Activated B cell treated with CpG ODN at 0.5 μM for 24 hours (primary cell): ENCODE measurements at regions of chr20 and their contacts with region 1.

Region 1: GRCh38 chr20:45890985-45891983 is at the starts of genes CTSA and NEURL2:
- DNase-seq: peak; percentile 86
- ATAC-seq: peak; percentile 87
- H3K4me3 Mint-ChIP-seq: peak within 1 kb of the TSS; percentile 93
- H3K27ac Mint-ChIP-seq: peak within 1 kb of the TSS; percentile 87
- H3K4me1 Mint-ChIP-seq: peaks cover 30% of the 10 kb centered on the region
- H3K27me3 Mint-ChIP-seq: no peaks in the 10 kb centered on the region
- CTCF ChIP-seq: no peak
- total RNA-seq, gene CTSA: 61.9 and 67.2 TPM in 2 replicates
- total RNA-seq, gene NEURL2: 1.1 and 2.0 TPM in 2 replicates

Region 2: DNA sequence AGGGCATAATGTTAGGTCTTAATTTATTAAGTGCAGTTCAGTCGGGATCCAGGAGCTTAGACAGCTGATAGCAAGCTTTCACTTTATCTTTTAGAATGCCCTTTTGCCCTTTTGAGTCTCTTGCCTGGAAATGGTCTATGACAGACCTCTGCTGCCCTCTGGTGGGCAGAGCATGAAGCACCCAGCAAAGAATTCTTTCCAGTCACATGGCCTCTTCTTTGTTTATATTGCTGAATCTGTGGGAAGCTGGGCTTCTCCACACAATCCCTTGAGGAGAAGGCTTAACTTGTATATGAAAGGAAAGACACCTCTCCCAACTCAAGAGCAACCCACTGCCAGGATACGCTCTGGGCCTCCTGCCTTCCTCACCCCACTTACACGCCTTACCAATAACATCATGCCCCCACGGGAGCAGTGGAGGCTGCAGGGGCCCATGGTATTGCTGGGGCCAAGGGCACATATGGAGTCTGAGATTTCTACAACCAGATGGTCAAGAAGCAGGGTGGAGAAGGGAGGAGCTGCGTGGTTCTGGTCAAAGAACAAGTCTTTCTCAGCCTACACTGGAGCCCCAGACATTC is 120.0 kb before region 1 on chr20:
- CTCF ChIA-PET with region 1: no interaction called
- POLR2A ChIA-PET with region 1: no interaction called
- intact Hi-C with region 1: no loop called
- DNase-seq: peak; percentile 65
- ATAC-seq: peak; percentile 71
- H3K4me3 Mint-ChIP-seq: no peak overlapping the region
- H3K27ac Mint-ChIP-seq: no peak overlapping the region
- H3K4me1 Mint-ChIP-seq: peaks cover 5% of the 10 kb centered on the region
- H3K27me3 Mint-ChIP-seq: peaks cover 16% of the 10 kb centered on the region
- CTCF ChIP-seq: peak; percentile 20

Region 3: DNA sequence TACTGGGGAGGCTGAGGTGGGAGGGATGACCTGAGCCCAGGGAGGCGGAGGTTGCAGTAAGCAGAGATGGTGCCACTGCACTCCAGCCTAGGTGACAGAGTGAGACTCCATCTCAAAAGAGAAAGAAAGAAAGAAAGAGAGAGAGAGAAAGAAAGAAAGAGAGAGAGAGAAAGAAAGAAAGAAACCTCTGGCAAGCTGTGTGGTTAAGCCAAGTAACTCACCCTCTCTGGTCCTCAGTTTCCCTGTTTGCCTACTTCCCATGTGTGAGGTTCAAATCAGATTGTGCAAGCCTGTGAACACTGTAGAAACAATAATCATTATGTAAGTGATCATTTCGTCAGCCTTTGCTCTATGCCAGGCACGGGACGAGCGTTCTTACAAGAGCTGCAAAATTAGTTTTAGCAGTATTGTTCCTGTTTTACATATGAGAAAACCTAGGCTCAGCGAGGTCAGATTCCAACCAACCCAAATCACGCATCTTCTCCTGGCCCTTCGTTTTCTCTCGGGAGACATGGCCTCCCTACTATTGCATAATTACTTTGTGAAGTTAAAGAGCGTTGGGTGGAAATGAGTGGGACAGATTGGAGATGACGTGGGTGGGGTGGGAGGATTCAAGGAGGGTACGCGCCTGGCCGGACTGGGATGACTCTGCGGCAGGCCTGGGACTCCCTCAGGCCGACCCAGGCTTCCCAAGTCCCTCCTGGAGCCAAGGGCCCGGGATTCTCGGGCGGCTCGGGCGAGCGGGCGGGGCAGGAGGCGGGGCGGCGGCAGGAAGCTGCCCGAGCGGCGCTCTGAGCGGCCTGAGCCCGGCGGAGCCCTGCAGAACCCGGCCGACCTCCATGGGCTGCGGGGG is 58.0 kb before region 1 on chr20 and contains the start of gene SNX21:
- CTCF ChIA-PET with region 1: no interaction called
- POLR2A ChIA-PET with region 1: no interaction called
- intact Hi-C with region 1: loop called (anchors 5 kb)
- DNase-seq: peak; percentile 50
- ATAC-seq: peak; percentile 76
- H3K4me3 Mint-ChIP-seq: peak within 1 kb of the TSS; percentile 86
- H3K27ac Mint-ChIP-seq: peak within 1 kb of the TSS; percentile 61
- H3K4me1 Mint-ChIP-seq: peaks cover 10% of the 10 kb centered on the region
- H3K27me3 Mint-ChIP-seq: no peaks in the 10 kb centered on the region
- CTCF ChIP-seq: no peak
- total RNA-seq, gene SNX21: 0.49 and 0.93 TPM in 2 replicates

Region 4: GRCh38 chr20:45857114-45857881 is 34.0 kb before region 1 on chr20 and contains the starts of genes ACOT8 and ZSWIM3:
- CTCF ChIA-PET with region 1: no interaction called
- POLR2A ChIA-PET with region 1: interaction called, 9 read pairs
- intact Hi-C with region 1: loop called (anchors 1 kb)
- DNase-seq: peak; percentile 67
- ATAC-seq: peak; percentile 98
- H3K4me3 Mint-ChIP-seq: peak within 1 kb of the TSS; percentile 94
- H3K27ac Mint-ChIP-seq: peak within 1 kb of the TSS; percentile 94
- H3K4me1 Mint-ChIP-seq: peaks cover 48% of the 10 kb centered on the region
- H3K27me3 Mint-ChIP-seq: no peaks in the 10 kb centered on the region
- CTCF ChIP-seq: no peak
- total RNA-seq, gene ACOT8: 24.5 and 27.3 TPM in 2 replicates
- total RNA-seq, gene ZSWIM3: 5.9 and 6.4 TPM in 2 replicates

Region 5: DNA sequence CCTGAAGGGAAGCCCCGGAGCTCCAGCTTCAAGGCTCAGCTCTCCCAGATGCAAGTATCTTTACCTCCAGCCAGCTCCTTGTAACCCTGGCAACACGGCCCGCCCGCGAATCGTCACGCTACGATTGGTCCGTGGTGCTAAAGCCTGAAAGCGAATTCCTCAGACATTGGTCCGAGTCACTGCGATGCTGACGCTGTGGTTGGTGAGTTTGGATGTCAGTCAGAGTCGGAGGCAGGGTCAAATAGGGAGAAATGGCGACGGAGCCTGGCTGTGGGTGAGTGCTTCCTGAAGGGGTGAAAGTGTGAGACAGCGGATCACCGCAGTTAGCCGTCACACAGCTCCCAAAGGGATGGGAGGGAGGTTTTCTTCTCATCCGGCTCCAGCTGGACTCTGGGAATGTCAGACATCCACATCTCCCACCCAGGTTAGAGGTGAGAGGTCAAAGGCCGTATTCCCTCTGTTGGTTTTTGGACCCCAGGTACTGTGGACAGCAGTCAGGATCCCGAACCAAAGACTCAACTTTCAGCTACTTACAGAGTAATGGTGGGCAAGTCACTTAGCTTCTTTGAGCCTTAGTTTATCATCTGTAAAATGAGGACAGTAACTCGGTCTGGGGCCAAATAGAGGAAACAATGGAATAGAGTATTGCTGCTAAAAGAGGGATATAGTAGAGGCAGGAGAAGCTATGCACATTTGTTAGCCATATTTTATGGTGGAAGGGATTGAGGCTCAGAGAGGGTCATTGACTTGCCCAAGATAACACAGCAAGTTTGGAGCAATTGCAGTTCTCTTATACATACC is 10.1 kb before region 1 on chr20 and contains the start of gene ZSWIM1:
- CTCF ChIA-PET with region 1: interaction called, 9 read pairs
- POLR2A ChIA-PET with region 1: interaction called, 43 read pairs
- intact Hi-C with region 1: loop called (anchors 1 kb)
- DNase-seq: peak; percentile 98
- ATAC-seq: peak; percentile 99
- H3K4me3 Mint-ChIP-seq: peak within 1 kb of the TSS; percentile 90
- H3K27ac Mint-ChIP-seq: peak within 1 kb of the TSS; percentile 93
- H3K4me1 Mint-ChIP-seq: peaks cover 34% of the 10 kb centered on the region
- H3K27me3 Mint-ChIP-seq: no peaks in the 10 kb centered on the region
- CTCF ChIP-seq: no peak
- total RNA-seq, gene ZSWIM1: 13.9 and 15.1 TPM in 2 replicates

Region 6: GRCh38 chr20:45910670-45911485 is 19.6 kb after region 1 on chr20:
- CTCF ChIA-PET with region 1: interaction called, 4 read pairs
- POLR2A ChIA-PET with region 1: interaction called, 21 read pairs
- intact Hi-C with region 1: loop called (anchors 1 kb)
- DNase-seq: peak; percentile 97
- ATAC-seq: peak; percentile 92
- H3K4me3 Mint-ChIP-seq: peak overlapping the region; percentile 90
- H3K27ac Mint-ChIP-seq: peak overlapping the region; percentile 83
- H3K4me1 Mint-ChIP-seq: peaks cover 31% of the 10 kb centered on the region
- H3K27me3 Mint-ChIP-seq: peaks cover 6% of the 10 kb centered on the region
- CTCF ChIP-seq: no peak

Region 7: DNA sequence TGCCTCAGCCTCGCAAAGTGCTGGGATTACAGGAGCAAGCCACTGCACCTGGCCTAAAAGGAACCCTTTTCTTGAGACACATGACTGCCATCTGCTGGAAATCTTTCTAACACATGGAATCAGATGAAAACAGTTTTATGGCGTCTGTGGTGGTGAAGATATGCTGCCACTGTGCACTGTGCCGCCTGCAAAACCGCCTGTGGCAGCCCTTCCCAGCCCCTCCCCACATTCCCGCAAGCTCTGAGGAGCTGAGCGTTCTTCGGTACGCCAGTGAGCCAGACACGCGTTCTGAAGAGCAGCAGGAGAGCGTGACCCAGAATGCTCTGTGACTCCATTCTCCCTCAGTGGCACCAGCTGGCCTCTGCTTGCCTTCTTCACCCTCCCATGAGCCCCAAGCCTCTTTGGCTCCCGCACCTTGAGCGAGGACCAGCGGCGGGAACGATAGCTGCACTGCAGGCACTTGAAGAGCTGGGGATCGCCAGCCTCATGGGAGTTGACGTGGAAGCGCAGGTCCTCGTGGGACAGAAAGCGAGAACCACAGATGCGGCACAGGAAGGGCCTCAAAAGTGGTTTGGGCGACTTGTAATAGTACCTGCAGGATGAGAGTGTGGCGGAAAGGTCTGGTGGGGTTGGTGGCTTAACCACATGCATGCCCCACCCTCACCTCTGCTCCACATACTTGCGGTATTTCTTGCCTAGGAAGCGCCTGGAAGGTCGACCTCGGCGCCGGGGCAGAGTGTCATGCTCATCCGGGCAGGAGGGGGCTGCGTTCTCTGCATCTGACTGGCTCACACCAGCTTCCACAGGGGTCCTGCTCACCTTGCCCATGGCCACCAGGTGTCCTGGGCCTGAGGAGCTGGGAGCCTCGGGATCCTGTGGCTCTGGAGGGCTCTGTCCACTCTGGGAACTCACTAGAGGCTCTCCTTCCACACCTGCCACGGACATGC is 72.0 kb after region 1 on chr20:
- CTCF ChIA-PET with region 1: interaction called, 4 read pairs
- POLR2A ChIA-PET with region 1: no interaction called
- intact Hi-C with region 1: loop called (anchors 1 kb)
- DNase-seq: no peak
- ATAC-seq: no peak
- H3K4me3 Mint-ChIP-seq: no peak overlapping the region
- H3K27ac Mint-ChIP-seq: no peak overlapping the region
- H3K4me1 Mint-ChIP-seq: peaks cover 21% of the 10 kb centered on the region
- H3K27me3 Mint-ChIP-seq: no peaks in the 10 kb centered on the region
- CTCF ChIP-seq: no peak

Region 8: DNA sequence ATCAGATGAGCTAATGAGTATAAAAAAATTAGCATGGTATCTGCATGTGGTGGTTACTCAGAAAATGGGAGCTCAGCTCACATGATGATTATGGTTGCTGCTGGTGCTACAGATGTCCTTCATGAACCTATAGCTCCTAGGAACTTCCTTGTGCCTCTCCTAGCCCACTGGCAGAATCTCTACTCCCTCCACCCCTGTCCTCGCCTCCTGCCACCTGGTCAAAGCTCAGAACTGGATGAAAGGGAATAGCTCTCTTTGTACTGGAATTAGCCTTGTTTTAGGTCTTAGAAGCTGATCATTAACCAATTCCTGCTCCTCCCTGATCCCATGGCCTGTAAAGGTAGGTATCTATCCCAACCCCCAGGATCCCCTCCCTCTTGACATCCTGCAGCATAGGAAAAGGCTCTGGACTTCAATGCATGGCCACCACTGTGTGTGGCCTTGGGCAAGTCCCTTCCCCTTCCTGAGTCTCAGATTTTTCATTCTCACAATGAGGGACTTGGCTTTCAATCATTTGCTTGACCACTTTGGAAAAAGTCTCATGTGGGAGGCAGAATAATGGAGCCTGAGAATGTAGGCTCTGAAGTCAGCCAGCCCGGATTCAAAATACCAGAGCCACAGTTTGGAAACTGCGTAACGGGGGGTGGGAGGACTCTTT is 716.0 kb after region 1 on chr20:
- CTCF ChIA-PET with region 1: no interaction called
- POLR2A ChIA-PET with region 1: no interaction called
- intact Hi-C with region 1: no loop called
- DNase-seq: no peak
- ATAC-seq: no peak
- H3K4me3 Mint-ChIP-seq: no peak overlapping the region
- H3K27ac Mint-ChIP-seq: no peak overlapping the region
- H3K4me1 Mint-ChIP-seq: no peaks in the 10 kb centered on the region
- H3K27me3 Mint-ChIP-seq: peaks cover 7% of the 10 kb centered on the region
- CTCF ChIP-seq: no peak